Colonic mucosa (tissue), 4 donors: ENCODE measurements at regions of chr7 and their contacts with region 1.

Region 1: DNA sequence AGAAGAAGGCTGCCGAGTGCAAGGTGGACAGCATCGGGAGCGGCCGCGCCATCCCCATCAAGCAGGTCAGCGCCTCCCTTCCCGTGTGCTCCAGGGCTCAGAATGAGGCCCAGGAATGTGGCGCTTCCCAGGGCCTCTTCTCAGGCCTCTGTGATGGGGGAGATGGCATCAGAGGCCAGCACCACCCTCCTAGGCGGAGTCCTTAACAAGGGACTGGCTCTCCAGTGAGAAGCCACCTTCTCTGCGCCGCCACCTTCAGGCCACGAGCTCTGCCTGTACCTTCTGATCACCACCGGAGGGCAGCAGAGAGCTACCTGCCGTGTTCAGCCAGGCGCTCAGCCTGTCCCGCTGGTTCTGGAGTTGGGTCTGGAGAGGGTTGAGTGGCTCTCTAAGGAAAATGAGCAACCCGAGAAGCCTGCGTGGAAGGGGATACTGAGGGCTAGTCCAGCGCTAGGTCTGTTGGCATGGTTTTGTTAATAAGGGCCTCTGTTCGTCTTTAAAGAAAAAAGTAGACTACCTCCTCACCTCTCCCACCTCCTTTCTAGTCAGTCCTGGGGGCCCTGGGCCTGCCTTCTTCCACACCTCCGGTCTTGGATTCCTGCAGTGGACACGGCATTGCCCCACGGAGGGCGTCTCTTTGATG is 37.7 kb downstream of the AGAP3 start:
- DNase-seq: peak; percentile 90
- H3K4me3 ChIP-seq: no peak overlapping the region
- H3K27ac ChIP-seq: no peak overlapping the region
- H3K4me1 ChIP-seq: peaks cover 4% of the 10 kb centered on the region
- H3K27me3 ChIP-seq: no peaks in the 10 kb centered on the region
- CTCF ChIP-seq: peak; percentile 91

Region 2: GRCh38 chr7:151172273-151173141 is 48.6 kb after region 1 on chr7:
- intact Hi-C with region 1: loop called (anchors 1 kb)
- DNase-seq: peak; percentile 72
- H3K4me3 ChIP-seq: no peak overlapping the region
- H3K27ac ChIP-seq: no peak overlapping the region
- H3K4me1 ChIP-seq: peaks cover 6% of the 10 kb centered on the region
- H3K27me3 ChIP-seq: peaks cover 15% of the 10 kb centered on the region
- CTCF ChIP-seq: peak; percentile 100

Region 3: DNA sequence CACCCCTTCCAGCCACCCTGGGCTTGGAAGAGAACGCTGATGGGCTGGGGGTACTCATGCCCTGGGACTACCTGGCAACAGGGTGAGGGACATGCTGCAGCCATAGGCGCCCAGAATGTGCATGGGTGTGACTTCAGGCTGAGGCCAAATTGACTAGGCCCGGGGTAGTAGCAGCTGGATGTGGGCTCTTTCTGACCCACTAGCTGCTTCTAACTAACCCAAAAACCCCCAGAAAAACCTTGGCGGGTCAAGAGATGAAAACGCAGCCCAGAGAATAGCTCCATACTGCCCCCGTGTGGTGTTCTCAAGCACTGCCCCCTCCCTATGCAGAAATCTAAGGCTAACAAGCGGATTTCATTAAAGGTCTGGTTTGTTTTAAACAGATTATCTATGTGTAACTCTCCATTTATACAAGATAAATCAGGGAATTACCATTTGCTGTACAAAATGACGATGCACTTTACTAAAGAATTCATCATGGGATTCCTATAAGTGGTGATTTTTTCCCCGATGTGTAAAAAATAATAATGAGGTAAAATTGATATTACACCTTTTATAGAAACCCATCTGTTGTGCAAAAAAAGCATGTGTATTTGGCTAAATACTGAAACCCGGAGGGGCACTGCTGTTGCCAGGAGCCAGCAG is 120.4 kb after region 1 on chr7:
- intact Hi-C with region 1: loop called (anchors 10 kb)
- DNase-seq: peak; percentile 57
- H3K4me3 ChIP-seq: no peak overlapping the region
- H3K27ac ChIP-seq: no peak overlapping the region
- H3K4me1 ChIP-seq: peaks cover 8% of the 10 kb centered on the region
- H3K27me3 ChIP-seq: peaks cover 32% of the 10 kb centered on the region
- CTCF ChIP-seq: peak; percentile 88

Region 4: DNA sequence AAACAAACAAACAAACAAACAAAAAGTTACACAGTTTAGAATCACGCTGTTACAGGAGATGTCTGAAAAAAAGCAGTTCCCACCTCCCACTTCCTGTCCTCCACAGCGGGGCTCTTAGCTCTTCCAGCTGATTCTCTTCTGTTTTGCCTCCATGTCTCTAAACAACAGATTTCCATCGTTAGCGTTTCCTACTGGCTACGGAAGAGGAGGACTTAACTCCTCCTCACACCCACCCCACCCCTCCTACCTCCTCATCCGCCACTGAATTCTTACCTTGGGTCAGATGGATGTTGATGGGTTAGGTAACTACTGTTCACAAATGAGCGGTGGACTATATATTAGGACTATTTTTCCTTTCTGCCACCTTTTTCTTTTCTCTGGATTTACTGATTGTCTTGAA is 180.9 kb after region 1 on chr7:
- intact Hi-C with region 1: loop called (anchors 5 kb)
- DNase-seq: no peak
- H3K4me3 ChIP-seq: no peak overlapping the region
- H3K27ac ChIP-seq: no peak overlapping the region
- H3K4me1 ChIP-seq: peaks cover 7% of the 10 kb centered on the region
- H3K27me3 ChIP-seq: peaks cover 6% of the 10 kb centered on the region
- CTCF ChIP-seq: no peak

Region 5: DNA sequence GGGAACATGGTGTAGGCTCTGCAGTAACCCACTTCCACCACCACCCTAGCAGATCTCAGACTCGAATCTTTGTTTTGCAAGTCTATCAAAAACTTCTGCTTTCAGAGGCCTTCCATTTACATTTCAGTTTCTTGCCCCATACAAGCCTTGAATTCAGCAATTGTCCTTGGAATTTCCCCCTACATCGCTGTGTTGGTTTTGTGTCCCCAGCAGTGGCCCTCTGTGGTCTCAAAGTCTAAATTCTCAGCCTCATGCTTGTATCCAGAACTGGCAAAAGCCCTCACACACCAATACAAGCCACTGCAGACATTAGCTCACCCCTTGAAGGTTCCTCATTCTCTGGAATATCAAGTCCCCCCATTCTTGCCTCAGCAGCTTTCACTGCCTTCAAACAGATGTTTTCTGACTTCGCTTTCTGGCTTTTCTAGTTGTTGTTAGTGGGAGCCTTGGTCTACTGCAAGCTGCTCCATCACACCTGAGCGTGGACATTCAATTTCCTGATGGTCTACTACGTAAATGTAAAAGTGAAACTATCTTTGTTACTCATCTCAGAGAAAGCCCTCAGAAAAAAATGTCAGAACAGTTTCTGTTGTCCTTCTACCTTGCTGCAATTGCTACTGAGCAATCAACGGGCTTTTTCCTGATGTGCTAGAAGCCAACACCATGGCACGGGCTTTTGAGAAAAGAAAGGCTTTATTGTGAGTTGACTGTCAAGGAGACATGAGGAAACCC is 215.9 kb after region 1 on chr7:
- intact Hi-C with region 1: no loop called
- DNase-seq: no peak
- H3K4me3 ChIP-seq: no peak overlapping the region
- H3K27ac ChIP-seq: peak overlapping the region; percentile 21
- H3K4me1 ChIP-seq: peaks cover 5% of the 10 kb centered on the region
- H3K27me3 ChIP-seq: no peaks in the 10 kb centered on the region
- CTCF ChIP-seq: no peak